ENCODE measurements at regions of chr11 and their contacts with region 1.

Region 1: GRCh38 chr11:129331871-129332274 is 43.8 kb upstream of the BARX2 start:
- DNase-seq: peak; percentile 77 to 80
- ATAC-seq: peak; percentile 69 to 97 (median 89)
- H3K4me3 ChIP-seq: no peak overlapping the region
- H3K27ac ChIP-seq: no peak overlapping the region
- H3K4me1 ChIP-seq: no peaks in the 10 kb centered on the region
- H3K27me3 ChIP-seq: no peaks in the 10 kb centered on the region
- CTCF ChIP-seq: peak; percentile 72 to 92 (median 88)

Region 2: DNA sequence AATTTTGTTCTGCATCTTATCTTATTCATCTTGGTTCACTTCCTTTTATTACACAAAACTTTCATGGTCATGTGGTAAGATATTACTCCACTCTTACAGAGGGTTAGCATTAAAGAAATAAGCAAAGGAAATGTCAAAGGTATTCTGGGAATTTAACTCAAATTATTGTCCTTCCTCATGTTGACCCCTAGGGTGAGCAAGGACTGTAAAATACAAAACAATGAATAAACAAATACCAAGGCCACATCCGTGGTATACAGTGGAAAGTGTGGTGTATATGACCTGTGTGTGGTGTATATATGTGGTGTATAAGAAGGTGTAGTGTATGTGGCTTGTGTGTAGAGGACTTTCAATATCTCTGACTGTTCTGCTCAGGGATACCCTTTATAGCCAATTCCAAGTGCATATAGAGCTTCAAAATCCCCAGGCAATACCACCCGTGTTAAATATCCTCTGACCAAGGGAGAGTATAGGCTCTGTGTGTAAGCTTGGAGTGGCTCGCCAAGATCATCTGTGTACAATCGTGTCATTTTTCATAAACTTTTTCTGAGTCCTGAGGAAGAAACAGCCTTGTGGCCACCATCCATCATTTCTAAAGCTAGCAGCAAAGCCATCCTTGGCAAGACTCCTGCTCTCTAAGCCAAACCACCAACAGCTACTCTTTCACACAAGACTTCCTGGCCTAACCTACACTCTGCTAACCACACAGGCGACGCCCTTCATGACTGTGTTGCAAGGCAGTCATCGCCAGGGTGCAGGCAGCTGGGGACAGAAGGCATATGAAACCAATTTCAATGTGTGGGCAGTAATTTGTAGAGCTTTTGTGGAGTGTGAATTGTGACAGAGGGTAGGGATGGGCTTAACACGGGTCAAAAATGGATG is 1292.5 kb before region 1 on chr11:
- intact Hi-C with region 1: loop called in 1 of 10 experiments (anchors 10 kb)
- DNase-seq: peak; percentile 4 to 21
- ATAC-seq: peak in 7 of 8 donors; percentile 33 to 79 (median 58)
- H3K4me3 ChIP-seq: no peak overlapping the region
- H3K27ac ChIP-seq: peak overlapping the region in 1 of 10 donors; percentile 78
- H3K4me1 ChIP-seq: peaks cover 0 to 36% (median 0%) of the 10 kb centered on the region in 9 donors
- H3K27me3 ChIP-seq: peaks cover 0 to 11% (median 0%) of the 10 kb centered on the region in 7 donors
- CTCF ChIP-seq: no peak

Region 3: GRCh38 chr11:128884703-128885338 is 447.1 kb before region 1 on chr11:
- intact Hi-C with region 1: loop called in 2 of 10 experiments (anchors 10 kb)
- DNase-seq: peak in 1 of 2 donors; percentile 61
- ATAC-seq: peak; percentile 71 to 90 (median 82)
- H3K4me3 ChIP-seq: no peak overlapping the region
- H3K27ac ChIP-seq: no peak overlapping the region
- H3K4me1 ChIP-seq: peaks cover 0 to 2% (median 0%) of the 10 kb centered on the region in 9 donors
- H3K27me3 ChIP-seq: peaks cover 0 to 44% (median 21%) of the 10 kb centered on the region in 7 donors
- CTCF ChIP-seq: peak; percentile 80 to 94 (median 87)

Region 4: GRCh38 chr11:129117595-129118350 is 214.1 kb before region 1 on chr11:
- intact Hi-C with region 1: loop called (anchors 1 to 5 kb)
- DNase-seq: peak in 1 of 2 donors; percentile 35
- ATAC-seq: peak in 2 of 8 donors; percentile 57 to 67
- H3K4me3 ChIP-seq: no peak overlapping the region
- H3K27ac ChIP-seq: no peak overlapping the region
- H3K4me1 ChIP-seq: no peaks in the 10 kb centered on the region
- H3K27me3 ChIP-seq: no peaks in the 10 kb centered on the region
- CTCF ChIP-seq: peak; percentile 76 to 93 (median 86)

Region 5: GRCh38 chr11:129230006-129230405 is 101.9 kb before region 1 on chr11:
- intact Hi-C with region 1: loop called in 6 of 10 experiments (anchors 2 to 10 kb)
- DNase-seq: no peak
- ATAC-seq: no peak
- H3K4me3 ChIP-seq: no peak overlapping the region
- H3K27ac ChIP-seq: no peak overlapping the region
- H3K4me1 ChIP-seq: no peaks in the 10 kb centered on the region
- H3K27me3 ChIP-seq: no peaks in the 10 kb centered on the region
- CTCF ChIP-seq: peak in 5 of 9 donors; percentile 11 to 46 (median 33)

Region 6: GRCh38 chr11:129279326-129280026 is 52.4 kb before region 1 on chr11:
- intact Hi-C with region 1: loop called in 1 of 10 experiments (anchors 5 kb)
- DNase-seq: peak; percentile 69 to 86
- ATAC-seq: peak; percentile 89 to 97 (median 92)
- H3K4me3 ChIP-seq: peak overlapping the region in 9 of 10 donors; percentile 39 to 71 (median 60)
- H3K27ac ChIP-seq: peak overlapping the region in 7 of 10 donors; percentile 1 to 61 (median 39)
- H3K4me1 ChIP-seq: peaks cover 0 to 40% (median 18%) of the 10 kb centered on the region in 9 donors
- H3K27me3 ChIP-seq: no peaks in the 10 kb centered on the region
- CTCF ChIP-seq: peak in 1 of 9 donors; percentile 15

Measured in heart right ventricle (tissue), 16 donors.